Aorta (tissue), 5 donors: ENCODE measurements at regions of chr1 and their contacts with region 1.

Region 1: GRCh38 chr1:158924677-158925076 is 6.7 kb upstream of the PYHIN1 start:
- DNase-seq: no peak
- ATAC-seq: no peak
- H3K4me3 ChIP-seq: no peak overlapping the region
- H3K27ac ChIP-seq: no peak overlapping the region
- H3K4me1 ChIP-seq: no peaks in the 10 kb centered on the region
- H3K27me3 ChIP-seq: no peaks in the 10 kb centered on the region

Region 2: DNA sequence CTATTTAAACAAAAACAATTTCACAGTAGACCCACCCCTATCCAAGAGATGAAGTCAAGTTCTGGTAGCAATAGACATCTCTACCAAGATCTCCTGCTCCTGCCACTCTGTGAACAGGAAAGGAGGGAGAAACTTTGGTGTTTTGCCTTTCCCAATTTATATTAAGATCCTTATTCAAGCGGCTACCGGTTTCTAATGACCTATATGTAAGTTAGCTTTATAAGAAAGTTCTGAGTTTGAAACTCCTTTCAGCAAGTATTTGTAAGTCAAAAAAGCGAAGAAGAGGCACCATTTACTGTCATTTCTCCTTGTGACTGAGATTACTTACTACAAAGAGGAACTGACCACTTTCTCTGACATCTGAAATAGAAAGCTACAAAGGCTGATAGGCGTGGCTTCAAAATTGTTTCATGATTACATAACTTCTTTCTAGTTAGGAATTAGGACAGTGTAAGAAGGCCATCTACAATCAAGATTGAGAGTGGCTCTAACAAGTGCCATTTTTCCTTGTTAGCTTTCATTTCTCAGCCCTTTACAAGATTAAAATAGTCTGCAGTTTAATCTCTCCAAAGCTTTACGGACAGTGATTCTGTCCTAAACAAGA is 93.7 kb before region 1 on chr1 and contains the start of gene MNDA:
- intact Hi-C with region 1: no loop called
- DNase-seq: no peak
- ATAC-seq: no peak
- H3K4me3 ChIP-seq: no peak within 1 kb of the TSS
- H3K27ac ChIP-seq: no peak within 1 kb of the TSS
- H3K4me1 ChIP-seq: no peaks in the 10 kb centered on the region
- H3K27me3 ChIP-seq: no peaks in the 10 kb centered on the region
- total RNA-seq, gene MNDA: 11.3 to 20.3 TPM

Region 3: GRCh38 chr1:158893654-158894053 is 31.0 kb before region 1 on chr1:
- intact Hi-C with region 1: loop called in 1 of 2 experiments (anchors 2 kb)
- DNase-seq: no peak
- ATAC-seq: no peak
- H3K4me3 ChIP-seq: no peak overlapping the region
- H3K27ac ChIP-seq: no peak overlapping the region
- H3K4me1 ChIP-seq: no peaks in the 10 kb centered on the region
- H3K27me3 ChIP-seq: no peaks in the 10 kb centered on the region